A549 (cell line): ENCODE measurements at regions of chr18 and their contacts with region 1.

Region 1: GRCh38 chr18:70431203-70431624 is 142.4 kb downstream of the SOCS6 start:
- DNase-seq: peak; percentile 78 to 98
- ATAC-seq: peak; percentile 86 to 97
- H3K4me3 ChIP-seq: no peak overlapping the region
- H3K27ac ChIP-seq: peak overlapping the region; percentile 93 to 100
- H3K4me1 ChIP-seq: peaks cover 41% of the 10 kb centered on the region
- CTCF ChIP-seq: no peak
- EP300 ChIP-seq: peak; percentile 100
- POLR2A ChIP-seq: no peak
- RAD21 ChIP-seq: peak; percentile 34 to 77

Region 2: GRCh38 chr18:70333757-70334156 is 97.5 kb before region 1 on chr18:
- CTCF ChIA-PET with region 1: interaction called, 12 read pairs
- POLR2A ChIA-PET with region 1: interaction called, 3 read pairs
- DNase-seq: peak; percentile 18 to 90
- ATAC-seq: peak; percentile 83 to 84
- H3K4me3 ChIP-seq: no peak overlapping the region
- H3K27ac ChIP-seq: peak overlapping the region; percentile 88 to 93
- H3K4me1 ChIP-seq: peaks cover 74% of the 10 kb centered on the region
- CTCF ChIP-seq: no peak
- EP300 ChIP-seq: peak; percentile 78 to 86; a peak in 3 of 5 replicates
- POLR2A ChIP-seq: no peak
- RAD21 ChIP-seq: no peak; a peak in 1 of 5 replicates

Region 3: DNA sequence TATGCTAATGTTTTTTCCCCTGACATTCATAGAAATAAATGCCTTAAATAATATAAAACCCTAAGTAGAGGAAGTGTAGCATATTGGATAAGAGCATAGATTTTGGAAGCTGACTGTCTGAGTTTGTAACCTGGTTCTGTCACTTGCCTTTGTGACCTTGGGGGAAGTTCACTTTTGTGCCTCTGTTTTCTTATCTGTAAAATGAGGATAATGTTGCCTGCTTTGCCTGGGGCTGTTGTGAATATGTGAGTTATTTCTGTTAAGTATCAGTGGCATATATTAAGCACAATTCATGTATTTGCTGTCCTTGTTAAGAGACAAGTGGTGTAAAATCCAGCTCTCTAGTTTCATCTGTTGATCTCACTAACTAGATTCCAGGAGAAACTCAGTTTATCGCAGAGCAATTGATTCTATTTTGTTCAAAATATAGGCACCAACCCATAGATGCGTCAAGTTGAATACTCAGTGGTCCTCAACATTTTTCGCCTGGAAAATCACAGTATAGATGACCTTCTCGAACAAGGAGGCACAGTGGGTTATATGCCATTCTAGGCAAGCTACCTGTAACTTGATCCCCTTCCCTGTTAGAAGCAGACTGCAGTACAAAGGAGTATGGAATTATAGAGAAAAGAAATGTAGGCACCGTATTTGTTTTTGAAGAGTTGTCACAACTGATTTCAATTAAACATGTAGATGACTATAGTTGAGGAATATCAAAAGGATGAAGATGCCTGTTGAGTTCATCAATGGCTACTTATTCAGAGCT is 75.4 kb before region 1 on chr18:
- CTCF ChIA-PET with region 1: interaction called, 13 read pairs
- POLR2A ChIA-PET with region 1: interaction called, 5 read pairs
- DNase-seq: no peak
- ATAC-seq: no peak
- H3K4me3 ChIP-seq: no peak overlapping the region
- H3K27ac ChIP-seq: peak overlapping the region; percentile 97
- H3K4me1 ChIP-seq: peaks cover 28% of the 10 kb centered on the region
- CTCF ChIP-seq: no peak
- EP300 ChIP-seq: no peak
- POLR2A ChIP-seq: no peak
- RAD21 ChIP-seq: no peak